Aorta (tissue), 5 donors: ENCODE measurements at regions of chr10 and their contacts with region 1.

Region 1: DNA sequence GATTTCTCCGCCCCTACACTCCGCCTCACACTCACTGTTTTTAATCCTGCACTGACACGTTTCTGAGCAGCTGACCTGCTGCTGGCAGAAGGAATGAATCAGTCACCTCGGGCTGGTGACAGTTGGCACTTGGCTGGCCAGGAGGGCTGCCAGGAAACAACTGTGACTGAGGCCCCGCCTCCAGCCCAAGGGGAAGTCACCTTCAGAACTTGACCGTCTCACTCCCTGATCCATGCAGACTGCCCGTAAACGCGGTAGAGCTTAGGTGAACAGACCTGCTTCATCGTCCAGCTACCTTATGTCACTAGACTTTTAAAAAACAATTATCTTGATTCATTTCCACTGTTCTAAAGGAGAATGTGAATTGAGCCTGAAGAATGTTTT is 107.5 kb downstream of the DOCK1 start:
- DNase-seq: peak; percentile 77 to 86
- ATAC-seq: peak; percentile 68
- H3K4me3 ChIP-seq: no peak overlapping the region
- H3K27ac ChIP-seq: no peak overlapping the region
- H3K4me1 ChIP-seq: no peaks in the 10 kb centered on the region
- H3K27me3 ChIP-seq: no peaks in the 10 kb centered on the region

Region 2: DNA sequence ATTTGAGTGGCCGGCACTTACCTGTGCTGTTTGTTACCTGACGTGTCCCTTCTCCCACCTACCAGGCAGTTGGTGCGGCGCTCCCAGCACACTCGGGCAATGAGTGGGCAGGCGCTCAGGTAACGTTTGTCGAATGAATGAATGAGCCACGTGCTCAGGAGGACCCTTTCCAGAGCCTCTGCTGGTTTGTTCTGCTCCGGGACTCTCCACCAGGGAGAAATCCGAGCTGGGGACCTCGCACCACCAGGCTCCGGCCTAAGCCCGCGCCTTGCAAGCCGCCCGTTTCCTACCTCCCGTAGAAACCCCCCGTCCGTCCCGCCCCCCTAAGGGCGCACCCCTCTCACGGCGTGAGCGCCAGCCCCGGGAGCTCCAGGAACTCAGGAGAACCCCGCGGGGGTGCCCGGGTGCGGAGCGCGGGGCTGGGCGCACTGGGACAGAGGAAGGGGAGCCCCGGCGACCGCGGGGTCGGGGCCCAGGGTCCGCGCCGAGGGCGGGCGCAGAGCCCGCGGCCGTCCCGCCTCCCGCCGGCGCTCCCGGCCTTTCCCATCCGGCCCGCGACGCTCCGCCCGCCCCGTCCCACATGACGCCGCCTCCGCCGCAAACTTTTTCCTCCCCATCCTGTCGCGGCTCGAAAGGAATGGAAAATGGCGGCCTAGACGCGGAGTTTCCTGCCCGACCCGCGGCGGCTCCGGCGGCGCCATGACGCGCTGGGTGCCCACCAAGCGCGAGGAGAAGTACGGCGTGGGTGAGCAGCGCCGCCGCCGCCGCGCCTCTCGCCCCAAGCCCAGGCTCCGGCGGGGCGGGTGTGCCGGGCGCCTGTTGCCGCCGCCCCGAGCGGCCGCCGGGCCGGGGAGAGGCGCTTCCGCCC is 107.7 kb before region 1 on chr10 and contains the start of gene DOCK1:
- intact Hi-C with region 1: loop called in 1 of 2 experiments (anchors 5 kb)
- DNase-seq: peak; percentile 81 to 92
- ATAC-seq: peak; percentile 80
- H3K4me3 ChIP-seq: peak within 1 kb of the TSS; percentile 92 to 97
- H3K27ac ChIP-seq: peak within 1 kb of the TSS; percentile 39 to 71
- H3K4me1 ChIP-seq: no peaks in the 10 kb centered on the region
- H3K27me3 ChIP-seq: no peaks in the 10 kb centered on the region
- total RNA-seq, gene DOCK1: 64.6 to 82.6 TPM